Activated CD8-positive, alpha-beta T cell treated with anti-CD3 and anti-CD28 coated beads for 36 hours (primary cell): ENCODE measurements at regions of chr1 and their contacts with region 1.

Region 1: GRCh38 chr1:26826261-26827105 is at the start of gene ZDHHC18:
- DNase-seq: peak; percentile 69
- ATAC-seq: peak; percentile 84
- H3K4me3 Mint-ChIP-seq: peak within 1 kb of the TSS; percentile 100
- H3K27ac Mint-ChIP-seq: peak within 1 kb of the TSS; percentile 96
- H3K4me1 Mint-ChIP-seq: peaks cover 45% of the 10 kb centered on the region
- H3K27me3 Mint-ChIP-seq: no peaks in the 10 kb centered on the region
- CTCF ChIP-seq: no peak
- total RNA-seq, gene ZDHHC18: 55.0 to 61.3 TPM

Region 2: GRCh38 chr1:26799479-26800142 is 26.9 kb before region 1 on chr1:
- CTCF ChIA-PET with region 1: interaction called, 13 read pairs
- POLR2A ChIA-PET with region 1: interaction called, 6 read pairs
- intact Hi-C with region 1: no loop called
- DNase-seq: peak; percentile 62
- ATAC-seq: peak; percentile 80
- H3K4me3 Mint-ChIP-seq: peak overlapping the region; percentile 64
- H3K27ac Mint-ChIP-seq: peak overlapping the region; percentile 96
- H3K4me1 Mint-ChIP-seq: peaks cover 47% of the 10 kb centered on the region
- H3K27me3 Mint-ChIP-seq: no peaks in the 10 kb centered on the region
- CTCF ChIP-seq: no peak

Region 3: DNA sequence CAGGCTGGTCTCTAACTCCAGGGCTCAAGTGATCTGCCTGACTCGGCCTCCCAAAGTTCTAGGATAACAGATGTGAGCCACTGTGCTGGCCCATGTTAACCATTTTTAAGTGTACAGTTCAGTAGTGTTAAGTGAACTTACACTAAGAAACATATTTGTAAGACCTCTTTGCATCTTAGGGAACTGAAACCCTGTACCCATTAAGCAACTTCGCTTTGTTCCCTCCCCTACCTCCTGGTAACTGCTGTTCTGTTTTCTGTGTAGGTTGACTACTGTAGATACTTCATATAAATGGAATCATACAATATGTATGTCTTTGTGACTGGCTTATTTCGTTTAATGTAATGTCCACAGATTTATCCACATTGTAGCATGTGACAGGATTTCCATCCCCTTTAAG is 106.0 kb after region 1 on chr1:
- CTCF ChIA-PET with region 1: no interaction called
- POLR2A ChIA-PET with region 1: no interaction called
- intact Hi-C with region 1: no loop called
- DNase-seq: no peak
- ATAC-seq: no peak
- H3K4me3 Mint-ChIP-seq: no peak overlapping the region
- H3K27ac Mint-ChIP-seq: no peak overlapping the region
- H3K4me1 Mint-ChIP-seq: peaks cover 8% of the 10 kb centered on the region
- H3K27me3 Mint-ChIP-seq: no peaks in the 10 kb centered on the region
- CTCF ChIP-seq: no peak

Region 4: DNA sequence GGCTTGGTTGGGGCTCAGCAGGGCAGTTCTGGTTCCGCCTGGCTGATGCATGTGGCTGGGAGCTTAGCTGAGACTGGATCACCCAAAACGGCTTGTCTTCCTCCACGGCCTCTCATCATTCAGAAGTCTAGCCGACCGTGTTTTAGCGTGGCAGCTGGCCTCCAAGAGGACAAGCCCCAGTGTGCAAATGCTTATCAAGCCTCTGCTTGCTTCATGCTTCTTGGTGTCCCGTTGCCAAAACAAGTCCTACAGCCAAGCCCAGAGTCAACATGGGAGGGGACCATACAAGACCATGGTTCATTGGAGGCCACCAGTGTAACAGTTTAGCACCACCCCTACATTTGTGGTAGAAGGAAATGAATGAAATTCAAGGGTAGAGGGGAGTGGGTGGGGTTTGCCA is 144.3 kb after region 1 on chr1:
- CTCF ChIA-PET with region 1: no interaction called
- POLR2A ChIA-PET with region 1: no interaction called
- intact Hi-C with region 1: no loop called
- DNase-seq: no peak
- ATAC-seq: no peak
- H3K4me3 Mint-ChIP-seq: no peak overlapping the region
- H3K27ac Mint-ChIP-seq: no peak overlapping the region
- H3K4me1 Mint-ChIP-seq: no peaks in the 10 kb centered on the region
- H3K27me3 Mint-ChIP-seq: peaks cover 7% of the 10 kb centered on the region
- CTCF ChIP-seq: no peak